Ascending aorta (tissue), 2 donors: ENCODE measurements at regions of chr10 and their contacts with region 1.

Region 1: GRCh38 chr10:129971381-129972144 is 7.5 kb upstream of the EBF3 start:
- DNase-seq: no peak
- H3K4me3 ChIP-seq: peak overlapping the region; percentile 48 to 57
- H3K27ac ChIP-seq: no peak overlapping the region
- H3K4me1 ChIP-seq: peaks cover 8 to 19% of the 10 kb centered on the region in 2 donors
- H3K27me3 ChIP-seq: peaks cover 37% of the 10 kb centered on the region
- CTCF ChIP-seq: peak in 2 of 3 experiments; percentile 40 to 50

Region 2: DNA sequence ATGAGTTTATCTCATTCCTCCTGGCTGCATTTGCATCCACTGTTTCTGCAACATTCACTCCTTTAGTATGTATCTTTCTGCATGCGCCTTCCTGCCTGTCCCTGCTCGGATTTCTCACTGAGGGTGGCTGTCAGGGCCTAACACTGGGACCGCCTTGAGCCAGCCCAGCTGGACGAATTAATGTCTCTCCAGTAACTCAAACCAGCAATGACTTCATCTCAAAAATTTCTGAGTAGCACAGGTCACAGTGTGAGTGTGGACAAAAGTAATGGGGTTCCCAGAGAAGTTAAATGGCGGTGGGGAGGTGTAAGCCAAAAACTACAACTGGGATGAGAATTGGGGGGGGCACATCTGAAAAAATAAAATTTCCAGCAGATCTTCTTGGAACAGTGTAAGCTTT is 948.5 kb before region 1 on chr10:
- intact Hi-C with region 1: no loop called
- DNase-seq: no peak
- H3K4me3 ChIP-seq: no peak overlapping the region
- H3K27ac ChIP-seq: no peak overlapping the region
- H3K4me1 ChIP-seq: no peaks in the 10 kb centered on the region
- H3K27me3 ChIP-seq: no peaks in the 10 kb centered on the region
- CTCF ChIP-seq: no peak

Region 3: GRCh38 chr10:129033790-129034272 is 937.7 kb before region 1 on chr10:
- intact Hi-C with region 1: loop called (anchors 2 kb)
- DNase-seq: no peak
- H3K4me3 ChIP-seq: no peak overlapping the region
- H3K27ac ChIP-seq: no peak overlapping the region
- H3K4me1 ChIP-seq: no peaks in the 10 kb centered on the region
- H3K27me3 ChIP-seq: no peaks in the 10 kb centered on the region
- CTCF ChIP-seq: no peak

Region 4: DNA sequence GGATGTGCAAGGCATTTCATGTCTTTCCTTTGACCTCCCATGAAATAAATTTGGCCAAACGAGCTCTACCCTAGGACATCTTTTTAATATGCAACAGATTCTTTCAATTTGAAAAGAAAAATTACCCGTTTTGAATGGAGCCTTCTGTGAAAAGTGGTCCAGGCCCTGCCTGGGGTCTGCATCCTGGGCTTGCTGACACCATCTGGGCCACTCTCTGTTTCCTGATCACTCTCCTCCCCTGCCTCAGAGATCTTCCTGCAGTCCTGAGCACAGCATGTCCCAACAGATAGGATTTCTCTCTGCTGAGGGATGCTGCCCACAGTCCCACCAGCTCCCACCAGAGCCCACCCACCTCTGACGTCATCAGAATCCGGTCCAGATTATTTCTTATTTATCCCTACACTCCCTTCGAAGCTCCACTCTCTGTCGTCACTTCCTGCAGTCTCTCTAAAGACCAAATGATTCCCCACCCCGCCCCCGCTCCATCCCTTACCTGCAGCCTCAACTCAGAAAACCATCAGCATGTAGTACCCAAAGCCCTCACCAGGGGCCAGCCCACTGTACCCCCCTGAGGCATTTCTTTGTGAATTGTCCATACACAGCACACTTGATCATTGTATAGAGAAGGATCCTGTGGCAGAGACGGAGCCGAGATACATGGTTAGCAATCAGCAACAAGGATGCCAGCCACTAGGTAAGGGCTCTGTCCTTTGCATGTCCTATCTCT is 696.7 kb before region 1 on chr10:
- intact Hi-C with region 1: no loop called
- DNase-seq: no peak
- H3K4me3 ChIP-seq: no peak overlapping the region
- H3K27ac ChIP-seq: no peak overlapping the region
- H3K4me1 ChIP-seq: no peaks in the 10 kb centered on the region
- H3K27me3 ChIP-seq: no peaks in the 10 kb centered on the region
- CTCF ChIP-seq: no peak

Region 5: GRCh38 chr10:129888784-129889616 is 82.6 kb before region 1 on chr10:
- intact Hi-C with region 1: loop called (anchors 5 kb)
- DNase-seq: no peak
- H3K4me3 ChIP-seq: no peak overlapping the region
- H3K27ac ChIP-seq: no peak overlapping the region
- H3K4me1 ChIP-seq: no peaks in the 10 kb centered on the region
- H3K27me3 ChIP-seq: peaks cover 3% of the 10 kb centered on the region
- CTCF ChIP-seq: peak in 2 of 3 experiments; percentile 34 to 48